T-cell (primary cell): ENCODE measurements at regions of chr12 and their contacts with region 1.

Region 1: GRCh38 chr12:76848132-76848531 is 30.7 kb downstream of the CSRP2 start:
- DNase-seq: no peak
- ATAC-seq: no peak
- H3K4me3 ChIP-seq: no peak overlapping the region
- H3K4me3 Mint-ChIP-seq: no peak overlapping the region
- H3K27ac ChIP-seq: no peak overlapping the region
- H3K27ac Mint-ChIP-seq: no peak overlapping the region
- H3K4me1 ChIP-seq: no peaks in the 10 kb centered on the region
- H3K4me1 Mint-ChIP-seq: no peaks in the 10 kb centered on the region
- H3K27me3 ChIP-seq: no peaks in the 10 kb centered on the region
- H3K27me3 Mint-ChIP-seq: no peaks in the 10 kb centered on the region

Region 2: GRCh38 chr12:76810671-76811419 is 37.3 kb before region 1 on chr12:
- CTCF ChIA-PET with region 1: no interaction called
- POLR2A ChIA-PET with region 1: interaction called in 1 of 2 experiments, 10 read pairs
- DNase-seq: no peak
- ATAC-seq: no peak
- H3K4me3 ChIP-seq: no peak overlapping the region
- H3K4me3 Mint-ChIP-seq: no peak overlapping the region
- H3K27ac ChIP-seq: no peak overlapping the region
- H3K27ac Mint-ChIP-seq: no peak overlapping the region
- H3K4me1 ChIP-seq: no peaks in the 10 kb centered on the region
- H3K4me1 Mint-ChIP-seq: no peaks in the 10 kb centered on the region
- H3K27me3 ChIP-seq: no peaks in the 10 kb centered on the region
- H3K27me3 Mint-ChIP-seq: no peaks in the 10 kb centered on the region

Region 3: DNA sequence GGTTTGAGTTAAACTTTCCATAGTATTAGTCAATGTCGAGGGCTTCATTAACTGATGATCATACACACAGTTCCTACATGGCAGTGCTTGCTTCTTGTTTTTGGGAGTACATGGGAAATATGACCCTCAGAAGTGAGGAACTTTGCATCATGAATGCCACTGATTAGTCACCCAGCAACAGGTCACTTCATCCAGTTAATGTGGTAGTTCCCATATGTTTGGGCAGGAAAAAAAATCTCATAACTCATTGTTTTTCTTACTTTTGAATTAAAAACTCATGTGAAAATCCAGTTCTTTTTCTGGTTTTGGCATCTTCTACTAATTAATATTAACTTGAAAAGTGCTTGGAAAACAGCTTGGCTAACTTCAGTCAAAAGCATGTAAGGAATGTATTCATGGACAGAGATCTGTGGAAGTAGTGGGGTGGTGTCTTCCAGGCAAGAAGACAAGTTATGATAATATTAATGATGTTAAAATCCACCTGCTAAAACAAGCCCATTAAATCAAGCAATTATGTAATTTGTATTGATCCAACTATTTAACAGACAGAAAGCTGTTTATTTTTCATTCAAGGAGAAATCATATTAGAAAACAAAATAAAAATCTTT is 673.5 kb after region 1 on chr12:
- CTCF ChIA-PET with region 1: no interaction called
- POLR2A ChIA-PET with region 1: interaction called in 1 of 2 experiments, 12 read pairs
- DNase-seq: no peak
- ATAC-seq: no peak
- H3K4me3 ChIP-seq: no peak overlapping the region
- H3K4me3 Mint-ChIP-seq: no peak overlapping the region
- H3K27ac ChIP-seq: no peak overlapping the region
- H3K27ac Mint-ChIP-seq: no peak overlapping the region
- H3K4me1 ChIP-seq: no peaks in the 10 kb centered on the region
- H3K4me1 Mint-ChIP-seq: no peaks in the 10 kb centered on the region
- H3K27me3 ChIP-seq: no peaks in the 10 kb centered on the region
- H3K27me3 Mint-ChIP-seq: no peaks in the 10 kb centered on the region